Activated CD8-positive, alpha-beta T cell treated with anti-CD3 and anti-CD28 coated beads, Interleukin-2, amount 10 ng/mL, durations not matched to agents 7 days and 5 days (primary cell): ENCODE measurements at regions of chr12 and their contacts with region 1.

Region 1: DNA sequence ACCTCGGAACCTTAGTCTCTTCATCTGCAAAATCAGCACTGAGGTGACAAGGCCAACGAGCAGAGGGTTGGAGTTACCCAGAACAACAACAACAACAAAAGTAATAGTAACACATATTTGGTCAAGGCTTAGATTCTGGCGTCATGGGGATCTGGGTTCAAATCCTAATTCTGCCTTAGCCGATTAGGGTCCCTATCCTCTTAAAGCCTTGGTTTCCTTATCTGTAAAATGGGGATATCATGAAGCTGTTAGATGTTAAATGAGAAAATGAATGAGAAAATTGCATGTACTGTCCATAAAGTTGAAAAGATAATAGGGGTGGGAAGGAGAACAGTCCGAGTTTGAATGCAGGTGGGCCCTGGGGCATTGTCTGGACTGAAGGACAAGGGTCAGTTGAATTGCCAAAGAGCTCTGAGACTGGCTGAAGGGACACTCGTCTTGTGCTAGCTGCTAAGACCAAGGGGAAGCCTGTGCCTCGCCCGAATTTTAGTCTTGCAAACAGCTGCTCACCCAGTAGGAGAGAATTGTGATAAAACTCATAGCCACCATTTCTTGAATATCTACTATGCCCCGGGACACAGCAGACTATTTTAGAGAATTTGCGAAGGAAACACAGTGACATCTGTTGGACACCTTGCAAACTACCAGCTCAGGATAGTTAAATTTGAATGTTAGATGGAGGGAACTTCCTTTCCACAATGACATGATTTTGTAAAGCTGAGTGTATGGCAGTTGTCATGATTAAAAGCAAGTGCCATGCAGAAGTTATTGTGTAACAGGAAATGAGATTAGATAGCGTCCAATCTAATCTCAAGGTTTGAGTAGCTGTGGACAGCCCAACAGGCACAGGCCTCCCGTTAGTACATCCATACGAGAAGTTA is 6.8 kb upstream of the HNF1A start:
- DNase-seq: peak; percentile 56
- ATAC-seq: peak; percentile 90
- H3K4me3 Mint-ChIP-seq: no peak overlapping the region
- H3K27ac Mint-ChIP-seq: no peak overlapping the region
- H3K4me1 Mint-ChIP-seq: peaks cover 9% of the 10 kb centered on the region
- H3K27me3 Mint-ChIP-seq: peaks cover 2% of the 10 kb centered on the region

Region 2: DNA sequence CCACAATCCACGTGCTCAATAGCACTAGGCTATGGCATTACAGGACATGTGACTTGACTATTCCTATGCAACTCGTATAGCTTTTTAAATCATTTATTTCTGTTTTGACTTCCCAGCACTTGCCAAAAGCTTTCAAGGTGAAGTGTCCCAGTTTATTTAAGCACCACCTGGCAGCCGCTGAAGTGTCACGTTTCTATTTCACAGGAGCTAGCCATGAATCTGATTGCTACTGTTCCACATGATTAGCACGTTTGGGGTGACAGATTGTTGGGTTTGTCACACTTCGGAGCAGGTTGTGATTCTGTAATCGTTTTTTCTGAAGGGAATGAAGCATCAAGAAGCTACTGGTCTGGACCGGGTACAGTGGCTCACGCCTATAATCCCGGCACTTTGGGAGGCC is 1022.4 kb before region 1 on chr12:
- CTCF ChIA-PET with region 1: no interaction called
- POLR2A ChIA-PET with region 1: no interaction called
- DNase-seq: no peak
- ATAC-seq: no peak
- H3K4me3 Mint-ChIP-seq: no peak overlapping the region
- H3K27ac Mint-ChIP-seq: no peak overlapping the region
- H3K4me1 Mint-ChIP-seq: no peaks in the 10 kb centered on the region
- H3K27me3 Mint-ChIP-seq: peaks cover 5% of the 10 kb centered on the region

Region 3: GRCh38 chr12:120580787-120581723 is 390.5 kb before region 1 on chr12 and contains the start of gene POP5:
- CTCF ChIA-PET with region 1: interaction called, 26 read pairs
- POLR2A ChIA-PET with region 1: interaction called, 5 read pairs
- DNase-seq: peak; percentile 97
- ATAC-seq: peak; percentile 97
- H3K4me3 Mint-ChIP-seq: peak within 1 kb of the TSS; percentile 99
- H3K27ac Mint-ChIP-seq: peak within 1 kb of the TSS; percentile 96
- H3K4me1 Mint-ChIP-seq: peaks cover 41% of the 10 kb centered on the region
- H3K27me3 Mint-ChIP-seq: peaks cover 15% of the 10 kb centered on the region
- total RNA-seq, gene POP5: 63.3 to 64.0 TPM

Region 4: DNA sequence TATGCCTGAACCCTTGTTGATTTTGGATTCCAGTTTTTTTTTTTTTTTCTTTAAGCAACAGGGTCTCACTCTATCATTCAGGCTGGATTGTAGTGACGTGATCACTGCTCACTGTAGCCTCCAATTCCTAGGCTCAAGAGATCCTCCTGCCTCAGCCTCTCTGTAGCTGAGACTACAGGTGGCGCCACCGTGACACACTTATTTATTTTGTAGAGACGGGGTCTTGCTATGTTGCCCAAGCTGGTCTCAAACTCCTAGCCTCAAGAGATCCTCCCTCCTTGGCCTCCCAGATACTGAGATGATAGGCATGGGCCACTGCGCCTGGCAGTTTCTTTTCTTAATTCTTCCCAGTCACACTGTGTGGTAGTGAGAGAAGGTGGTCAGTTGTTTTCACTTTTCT is 220.7 kb before region 1 on chr12:
- CTCF ChIA-PET with region 1: interaction called, 17 read pairs
- POLR2A ChIA-PET with region 1: no interaction called
- DNase-seq: no peak
- ATAC-seq: no peak
- H3K4me3 Mint-ChIP-seq: no peak overlapping the region
- H3K27ac Mint-ChIP-seq: no peak overlapping the region
- H3K4me1 Mint-ChIP-seq: no peaks in the 10 kb centered on the region
- H3K27me3 Mint-ChIP-seq: peaks cover 8% of the 10 kb centered on the region

Region 5: GRCh38 chr12:120886199-120887018 is 85.1 kb before region 1 on chr12:
- CTCF ChIA-PET with region 1: interaction called, 12 read pairs
- POLR2A ChIA-PET with region 1: interaction called, 3 read pairs
- DNase-seq: no peak
- ATAC-seq: peak; percentile 87
- H3K4me3 Mint-ChIP-seq: peak overlapping the region; percentile 49
- H3K27ac Mint-ChIP-seq: peak overlapping the region; percentile 85
- H3K4me1 Mint-ChIP-seq: peaks cover 46% of the 10 kb centered on the region
- H3K27me3 Mint-ChIP-seq: no peaks in the 10 kb centered on the region

Region 6: DNA sequence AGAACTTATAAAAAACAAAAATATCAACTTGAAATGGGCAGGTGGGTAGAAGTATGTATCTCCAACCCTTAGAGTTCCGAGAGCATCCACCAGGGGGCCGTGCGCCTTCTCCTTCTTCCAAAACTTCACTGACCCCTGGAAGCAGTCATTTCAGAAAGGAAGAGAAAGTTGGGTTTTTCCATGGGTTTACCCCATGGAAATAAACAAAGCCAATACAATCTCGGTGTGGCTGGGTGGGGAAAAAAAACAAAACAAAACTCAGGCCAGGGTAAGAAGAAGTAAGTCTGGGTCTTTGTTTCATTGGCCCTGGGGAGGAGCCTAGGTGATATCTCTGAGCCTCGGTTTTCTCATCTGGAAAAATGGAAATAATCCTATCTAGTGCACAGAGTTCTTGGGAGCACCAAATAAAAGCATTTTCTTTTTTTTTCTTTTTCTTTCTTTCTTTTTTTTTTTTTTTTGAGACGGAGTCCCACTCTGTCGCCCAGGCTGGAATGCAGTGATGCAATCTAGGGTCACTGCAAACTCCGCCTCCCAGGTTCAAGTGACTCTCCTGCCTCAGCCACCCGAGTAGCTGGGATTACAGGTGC is 26.8 kb before region 1 on chr12:
- CTCF ChIA-PET with region 1: interaction called, 31 read pairs
- POLR2A ChIA-PET with region 1: interaction called, 3 read pairs
- DNase-seq: peak; percentile 73
- ATAC-seq: peak; percentile 74
- H3K4me3 Mint-ChIP-seq: no peak overlapping the region
- H3K27ac Mint-ChIP-seq: no peak overlapping the region
- H3K4me1 Mint-ChIP-seq: peaks cover 3% of the 10 kb centered on the region
- H3K27me3 Mint-ChIP-seq: no peaks in the 10 kb centered on the region

Region 7: GRCh38 chr12:121017966-121018491 is 46.5 kb after region 1 on chr12:
- CTCF ChIA-PET with region 1: no interaction called
- POLR2A ChIA-PET with region 1: no interaction called
- DNase-seq: no peak
- ATAC-seq: no peak
- H3K4me3 Mint-ChIP-seq: no peak overlapping the region
- H3K27ac Mint-ChIP-seq: no peak overlapping the region
- H3K4me1 Mint-ChIP-seq: peaks cover 21% of the 10 kb centered on the region
- H3K27me3 Mint-ChIP-seq: no peaks in the 10 kb centered on the region

Region 8: DNA sequence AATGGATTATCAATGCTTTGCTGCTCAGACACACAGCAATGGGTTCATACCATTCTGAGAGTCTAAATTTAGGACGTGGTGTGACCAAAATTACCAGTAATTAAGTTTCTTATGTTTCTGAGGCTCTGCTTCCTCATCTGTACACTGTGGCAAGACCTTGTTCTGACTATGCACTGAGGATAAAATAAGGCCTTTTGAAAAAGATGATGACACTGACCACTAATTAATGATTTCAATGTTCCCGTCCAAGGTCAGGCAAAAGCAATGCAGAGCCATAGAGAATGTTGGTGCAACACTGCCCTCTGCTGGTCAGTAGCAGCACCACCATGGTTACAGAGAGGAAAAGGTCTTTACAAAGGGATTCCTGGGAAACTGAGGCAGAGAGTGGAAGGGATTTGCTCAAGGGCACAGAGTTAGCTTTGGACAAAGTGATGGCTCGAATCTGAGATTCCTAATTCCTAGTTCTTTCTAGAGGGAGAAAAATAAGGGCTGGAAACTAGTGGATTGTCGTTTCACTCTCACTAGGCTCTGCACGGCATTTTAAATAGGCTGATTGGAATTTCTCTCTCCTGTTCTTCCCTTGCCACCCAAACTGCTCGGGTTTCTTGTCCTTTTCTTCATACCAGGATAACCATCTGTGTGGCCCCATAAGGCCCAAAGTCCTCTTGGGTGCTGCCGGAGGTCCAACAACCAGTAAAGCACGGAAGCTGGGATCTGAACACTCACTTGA is 138.8 kb after region 1 on chr12:
- CTCF ChIA-PET with region 1: interaction called, 10 read pairs
- POLR2A ChIA-PET with region 1: no interaction called
- DNase-seq: peak; percentile 81
- ATAC-seq: peak; percentile 75
- H3K4me3 Mint-ChIP-seq: no peak overlapping the region
- H3K27ac Mint-ChIP-seq: no peak overlapping the region
- H3K4me1 Mint-ChIP-seq: peaks cover 19% of the 10 kb centered on the region
- H3K27me3 Mint-ChIP-seq: no peaks in the 10 kb centered on the region

Region 9: DNA sequence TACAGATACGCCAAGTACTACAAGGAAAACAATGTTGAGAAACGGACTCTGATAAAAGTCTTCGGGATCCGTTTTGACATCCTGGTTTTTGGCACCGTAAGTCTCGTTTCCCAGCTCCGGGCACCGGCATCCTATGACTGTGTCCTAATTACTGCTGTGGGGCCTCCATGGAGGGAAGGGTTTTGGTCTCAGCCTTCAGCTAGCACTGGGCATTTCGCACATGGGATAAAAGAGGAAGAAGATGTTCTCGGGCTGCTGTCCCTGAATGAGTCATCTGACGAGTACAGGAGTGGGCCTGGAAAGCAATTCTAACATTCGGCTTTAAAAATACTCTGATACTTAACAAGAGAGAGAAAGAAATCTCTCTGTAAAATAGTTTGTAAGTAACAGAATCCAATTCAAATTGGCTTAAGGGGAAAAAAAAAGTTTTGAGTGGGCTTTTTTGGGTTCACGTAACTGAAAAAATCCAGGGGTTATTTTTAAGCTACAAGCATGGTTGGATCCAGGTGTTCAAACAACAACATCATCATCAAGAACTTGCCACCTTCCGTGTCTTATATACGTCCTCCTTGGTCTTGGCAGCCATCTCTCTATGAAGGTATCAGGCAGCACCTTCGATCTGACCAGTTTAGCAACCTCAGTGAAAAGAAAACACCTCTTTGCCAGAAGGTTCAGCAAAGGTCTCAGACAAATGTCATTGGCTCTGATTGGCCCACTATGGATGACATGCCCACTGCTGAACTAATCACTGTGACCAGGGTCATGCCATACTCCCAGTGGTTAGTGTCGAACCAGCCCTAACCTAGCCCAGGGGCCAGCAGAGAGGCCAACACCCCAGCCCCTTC is 204.1 kb after region 1 on chr12:
- CTCF ChIA-PET with region 1: no interaction called
- POLR2A ChIA-PET with region 1: no interaction called
- DNase-seq: no peak
- ATAC-seq: no peak
- H3K4me3 Mint-ChIP-seq: no peak overlapping the region
- H3K27ac Mint-ChIP-seq: no peak overlapping the region
- H3K4me1 Mint-ChIP-seq: peaks cover 5% of the 10 kb centered on the region
- H3K27me3 Mint-ChIP-seq: no peaks in the 10 kb centered on the region